WTC11 (cell line): ENCODE measurements at regions of chr15 and their contacts with region 1.

Region 1: DNA sequence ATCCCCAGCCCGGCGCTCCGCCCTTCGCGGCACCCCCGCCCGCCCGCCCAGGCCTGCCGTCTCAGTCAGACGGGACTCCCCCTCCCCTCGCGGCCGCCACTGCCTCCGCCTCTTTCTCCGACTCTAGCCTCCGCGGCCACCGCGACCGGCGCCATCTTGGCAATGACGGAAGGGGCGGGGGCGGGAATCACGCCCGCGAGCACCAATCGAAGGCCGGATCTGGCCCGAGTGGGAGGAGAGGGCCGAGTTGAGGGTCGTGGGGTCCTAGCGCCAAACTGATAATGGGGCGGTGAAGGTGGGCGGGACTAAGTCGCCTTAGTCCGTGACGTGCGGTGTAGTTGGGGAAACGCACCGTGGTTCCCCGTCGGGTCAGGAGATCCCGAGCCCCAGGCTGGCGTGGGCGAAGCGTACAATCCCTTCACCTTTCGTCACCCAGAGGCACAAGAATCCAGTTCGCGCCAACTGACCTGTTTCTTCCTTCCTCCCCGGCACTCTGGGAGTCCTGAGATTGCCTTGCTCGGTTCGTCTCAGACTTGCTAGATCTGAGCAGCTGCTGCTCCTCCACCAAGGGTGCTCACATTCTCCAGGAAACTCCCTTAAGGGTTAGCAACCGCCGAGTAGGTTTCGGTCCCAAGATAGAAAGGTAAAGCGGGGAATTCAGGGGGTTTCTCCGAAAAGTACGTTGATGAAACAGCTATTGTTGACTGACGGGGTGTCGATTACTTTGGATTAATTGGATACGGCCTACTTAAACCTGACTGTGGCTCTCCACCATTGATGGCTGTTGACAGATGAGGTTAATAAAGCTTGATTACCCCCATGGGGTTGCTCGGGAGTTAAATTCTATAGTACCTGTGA is at the start of gene DENND4A:
- DNase-seq: peak; percentile 97
- ATAC-seq: peak; percentile 96
- H3K4me3 Mint-ChIP-seq: peak within 1 kb of the TSS; percentile 88
- H3K27ac Mint-ChIP-seq: peak within 1 kb of the TSS; percentile 98
- H3K4me1 Mint-ChIP-seq: peaks cover 31% of the 10 kb centered on the region
- H3K27me3 Mint-ChIP-seq: no peaks in the 10 kb centered on the region
- CTCF ChIP-seq: no peak
- total RNA-seq, gene DENND4A: 4.9 to 5.7 TPM (median 5.5 TPM) in 3 replicates

Region 2: DNA sequence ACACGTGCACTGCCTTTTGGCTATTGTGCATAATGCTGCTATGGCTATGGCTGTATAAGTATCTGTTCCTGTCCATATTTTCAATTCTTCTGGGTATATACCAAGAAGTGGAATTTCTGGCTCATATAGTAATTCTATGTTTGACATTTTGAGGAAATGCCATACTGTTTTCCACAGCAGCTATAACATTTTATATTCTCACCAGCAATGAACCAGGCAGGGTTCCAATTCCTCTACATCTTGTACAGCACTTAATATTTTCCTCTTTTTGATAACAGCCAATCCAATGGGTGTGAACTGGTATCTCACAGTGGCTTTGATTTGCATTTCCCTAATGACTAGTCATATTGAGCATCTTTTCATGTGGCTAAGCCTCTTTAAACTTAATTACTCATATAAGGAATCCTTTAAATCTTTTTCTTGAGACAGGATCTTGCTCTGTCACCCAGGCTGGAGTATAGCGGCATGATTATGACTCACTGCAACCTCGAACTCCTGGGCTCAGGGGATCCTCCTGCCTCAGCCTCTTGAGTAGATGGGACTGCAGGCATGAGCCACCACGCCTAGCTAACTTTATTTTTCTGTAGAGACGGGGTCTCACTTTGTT is 331.5 kb before region 1 on chr15:
- CTCF ChIA-PET with region 1: no interaction called
- POLR2A ChIA-PET with region 1: no interaction called
- DNase-seq: no peak
- ATAC-seq: no peak
- H3K4me3 Mint-ChIP-seq: no peak overlapping the region
- H3K27ac Mint-ChIP-seq: no peak overlapping the region
- H3K4me1 Mint-ChIP-seq: no peaks in the 10 kb centered on the region
- H3K27me3 Mint-ChIP-seq: no peaks in the 10 kb centered on the region
- CTCF ChIP-seq: no peak

Region 3: GRCh38 chr15:65869127-65869953 is 77.0 kb after region 1 on chr15 and contains the start of gene RAB11A:
- CTCF ChIA-PET with region 1: interaction called, 3 read pairs
- POLR2A ChIA-PET with region 1: interaction called, 11 read pairs
- DNase-seq: peak; percentile 95
- ATAC-seq: peak; percentile 91
- H3K4me3 Mint-ChIP-seq: peak within 1 kb of the TSS; percentile 99
- H3K27ac Mint-ChIP-seq: peak within 1 kb of the TSS; percentile 99
- H3K4me1 Mint-ChIP-seq: peaks cover 16% of the 10 kb centered on the region
- H3K27me3 Mint-ChIP-seq: peaks cover 3% of the 10 kb centered on the region; the same call in 1 of the 2 replicates
- CTCF ChIP-seq: no peak
- total RNA-seq, gene RAB11A: 223 to 245 TPM (median 224 TPM) in 3 replicates